ENCODE measurements at regions of chr14 and their contacts with region 1.

Region 1: DNA sequence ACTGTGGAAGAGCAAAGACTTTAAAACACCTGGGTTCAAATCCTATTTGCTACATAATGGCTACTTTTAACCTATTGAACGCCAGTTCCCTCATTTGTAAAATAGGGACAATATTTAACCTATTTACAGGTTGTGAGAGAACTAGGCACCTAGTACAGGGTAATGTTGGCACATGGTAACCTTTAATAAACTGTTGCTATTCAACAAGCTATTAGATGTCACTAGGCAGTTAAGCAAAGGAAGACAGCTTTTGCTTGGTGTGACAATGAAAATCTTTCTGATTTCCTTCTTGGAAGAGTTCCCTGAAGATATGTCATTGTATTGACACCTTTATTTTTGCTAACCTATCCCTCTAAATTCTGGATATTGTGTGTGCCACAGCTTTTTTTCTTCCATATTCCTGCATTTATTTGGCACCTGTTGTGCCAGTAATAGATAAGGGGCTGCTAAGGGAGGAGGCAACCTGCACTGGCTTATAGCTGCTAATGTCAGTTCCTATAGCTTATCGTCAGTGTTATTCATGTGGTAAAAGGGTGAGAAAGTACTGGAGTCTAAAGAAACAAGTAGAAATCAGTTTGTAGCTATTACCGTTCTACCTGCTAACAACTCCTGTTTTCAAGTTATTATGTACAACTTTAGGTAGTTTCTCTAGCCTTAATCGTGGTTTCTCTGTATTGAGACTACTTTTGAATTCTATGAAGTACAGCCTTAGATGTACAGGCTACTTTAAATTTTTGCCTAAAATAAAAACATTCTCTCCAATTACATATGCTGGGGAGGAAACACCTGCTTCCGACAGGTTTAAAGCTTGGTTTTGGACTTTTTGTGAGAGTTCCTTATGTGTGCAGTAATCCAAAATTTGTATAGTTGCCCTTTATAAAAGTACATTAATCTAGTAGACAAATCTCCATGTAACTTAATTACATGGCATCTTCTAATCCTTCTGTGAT is 24.3 kb downstream of the HIF1A start:
- DNase-seq: no peak
- H3K4me3 ChIP-seq: no peak overlapping the region
- H3K27ac ChIP-seq: peak overlapping the region in 2 of 4 donors; percentile 13 to 41
- H3K4me1 ChIP-seq: peaks cover 3 to 58% (median 15%) of the 10 kb centered on the region in 4 donors
- H3K27me3 ChIP-seq: no peaks in the 10 kb centered on the region
- CTCF ChIP-seq: no peak
- EP300 ChIP-seq: no peak
- POLR2A ChIP-seq: no peak

Region 2: GRCh38 chr14:61461808-61462275 is 257.8 kb before region 1 on chr14:
- in situ Hi-C with region 1: loop called in 2 of 4 experiments (anchors 10 kb)
- intact Hi-C with region 1: loop called (anchors 10 kb)
- DNase-seq: no peak
- H3K4me3 ChIP-seq: no peak overlapping the region
- H3K27ac ChIP-seq: no peak overlapping the region
- H3K4me1 ChIP-seq: peaks cover 0 to 18% (median 4%) of the 10 kb centered on the region in 4 donors
- H3K27me3 ChIP-seq: no peaks in the 10 kb centered on the region
- CTCF ChIP-seq: peak; percentile 76 to 86 (median 81)
- EP300 ChIP-seq: no peak
- POLR2A ChIP-seq: no peak

Measured in transverse colon (tissue), 4 donors.